Adrenal gland (tissue), 19 donors: ENCODE measurements at regions of chr1 and their contacts with region 1.

Region 1: GRCh38 chr1:221435504-221435904 is 306.4 kb downstream of the DUSP10 start:
- DNase-seq: no peak
- H3K4me3 ChIP-seq: no peak overlapping the region
- H3K27ac ChIP-seq: no peak overlapping the region
- H3K4me1 ChIP-seq: no peaks in the 10 kb centered on the region
- H3K27me3 ChIP-seq: no peaks in the 10 kb centered on the region
- CTCF ChIP-seq: peak; percentile 76 to 96 (median 90)
- POLR2A ChIP-seq: no peak

Region 2: GRCh38 chr1:220879076-220879508 is 556.4 kb before region 1 on chr1 and contains the start of gene HLX:
- intact Hi-C with region 1: loop called in 1 of 2 experiments (anchors 10 kb)
- DNase-seq: peak; percentile 78 to 89 (median 86)
- H3K4me3 ChIP-seq: peak within 1 kb of the TSS; percentile 50 to 90 (median 68)
- H3K27ac ChIP-seq: peak within 1 kb of the TSS; percentile 33 to 92 (median 87)
- H3K4me1 ChIP-seq: peaks cover 4 to 5% of the 10 kb centered on the region in 2 donors
- H3K27me3 ChIP-seq: peaks cover 6% of the 10 kb centered on the region
- CTCF ChIP-seq: no peak
- POLR2A ChIP-seq: peak; percentile 43 to 52
- total RNA-seq, gene HLX: 3.1 to 13.8 (median 6.9) TPM

Region 3: DNA sequence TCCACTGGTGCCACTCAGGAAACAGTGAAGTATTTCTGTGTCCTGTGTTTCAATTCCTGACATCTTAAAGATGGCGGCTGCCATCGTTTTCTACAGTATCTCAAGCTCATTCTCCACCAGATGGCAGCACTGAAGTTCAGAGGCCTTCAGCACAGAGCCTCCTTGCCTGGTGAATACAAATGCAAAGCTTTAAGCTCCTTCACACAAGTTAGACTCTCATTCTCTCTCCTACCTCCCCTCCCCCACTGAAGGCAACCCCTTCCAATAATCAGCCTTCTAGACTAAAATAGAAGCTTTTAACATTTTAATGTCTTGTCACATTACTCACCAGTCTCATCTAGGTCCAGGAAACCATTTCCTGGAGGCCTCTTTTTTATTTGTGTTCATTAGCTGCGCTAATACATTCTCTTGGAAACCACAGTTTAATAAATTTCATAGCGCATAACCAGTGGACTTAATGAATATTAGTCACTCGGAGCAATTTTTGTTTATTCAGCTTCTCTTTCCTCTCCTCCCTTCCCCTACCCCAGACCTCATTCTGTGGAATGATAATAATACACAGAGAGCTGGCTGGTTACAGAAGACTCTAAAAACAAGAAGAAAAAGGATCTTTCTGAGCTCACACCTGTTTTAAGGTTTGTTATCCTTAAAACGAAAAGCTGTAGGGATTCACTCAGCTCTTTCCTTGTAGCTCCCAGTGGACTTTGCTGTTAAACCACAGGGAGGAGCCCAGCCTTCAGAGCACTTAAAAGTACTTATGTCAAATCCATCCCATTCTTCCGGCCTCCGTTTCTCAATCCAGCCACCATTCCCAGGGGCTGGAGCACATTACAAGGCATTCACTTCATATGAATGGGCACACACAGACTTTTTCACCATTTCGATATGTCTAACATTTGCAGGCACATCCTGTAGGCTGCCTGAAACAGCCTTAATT is 171.4 kb before region 1 on chr1:
- intact Hi-C with region 1: loop called in 1 of 2 experiments (anchors 10 kb)
- DNase-seq: peak; percentile 57 to 86 (median 70)
- H3K4me3 ChIP-seq: no peak overlapping the region
- H3K27ac ChIP-seq: no peak overlapping the region
- H3K4me1 ChIP-seq: no peaks in the 10 kb centered on the region
- H3K27me3 ChIP-seq: no peaks in the 10 kb centered on the region
- CTCF ChIP-seq: peak; percentile 40 to 65 (median 60)
- POLR2A ChIP-seq: no peak

Region 4: DNA sequence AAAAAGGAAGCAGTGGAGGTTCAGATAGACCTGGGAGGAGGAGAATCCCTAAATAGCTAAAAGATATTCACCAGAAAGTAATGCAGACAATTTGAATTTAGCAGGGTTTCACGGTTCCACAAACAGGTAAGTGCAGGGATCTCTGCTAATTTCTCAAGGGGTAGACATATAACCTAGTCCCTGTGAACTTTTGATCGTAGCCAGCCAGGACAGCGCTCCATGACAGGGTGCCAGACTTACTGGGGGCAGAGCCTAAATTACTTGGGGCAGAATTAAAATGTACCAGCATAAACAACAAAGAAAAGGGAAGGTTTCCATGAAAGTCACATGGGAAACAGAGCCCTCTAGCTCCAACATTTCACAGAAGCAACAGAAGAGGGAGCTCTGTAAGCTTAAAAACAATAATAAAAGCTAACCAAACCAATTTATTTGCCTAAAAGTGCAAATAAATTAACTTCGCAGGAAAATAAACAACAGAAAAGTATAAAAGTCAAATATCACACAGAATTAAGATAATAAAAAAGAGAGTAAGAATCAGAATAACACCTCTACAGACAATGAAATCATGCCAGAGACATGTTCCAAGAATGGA is 108.1 kb after region 1 on chr1:
- intact Hi-C with region 1: no loop called
- DNase-seq: peak in 1 of 7 donors; percentile 9
- H3K4me3 ChIP-seq: no peak overlapping the region
- H3K27ac ChIP-seq: no peak overlapping the region
- H3K4me1 ChIP-seq: no peaks in the 10 kb centered on the region
- H3K27me3 ChIP-seq: no peaks in the 10 kb centered on the region
- CTCF ChIP-seq: peak; percentile 42 to 82 (median 60)
- POLR2A ChIP-seq: no peak